Naive thymus-derived CD8-positive, alpha-beta T cell (primary cell): ENCODE measurements at regions of chr4 and their contacts with region 1.

Region 1: GRCh38 chr4:94165256-94165655 is 42.4 kb upstream of the SMARCAD1 start:
- DNase-seq: no peak
- ATAC-seq: no peak
- H3K4me3 Mint-ChIP-seq: no peak overlapping the region
- H3K27ac Mint-ChIP-seq: no peak overlapping the region
- H3K4me1 Mint-ChIP-seq: no peaks in the 10 kb centered on the region
- H3K27me3 Mint-ChIP-seq: peaks cover 0 to 4% (median 0%) of the 10 kb centered on the region in 5 donors

Region 2: GRCh38 chr4:95232358-95233156 is 1067.3 kb after region 1 on chr4:
- POLR2A ChIA-PET with region 1: no interaction called
- DNase-seq: no peak
- ATAC-seq: no peak
- H3K4me3 Mint-ChIP-seq: no peak overlapping the region
- H3K27ac Mint-ChIP-seq: no peak overlapping the region
- H3K4me1 Mint-ChIP-seq: peaks cover 0 to 4% (median 0%) of the 10 kb centered on the region in 4 donors
- H3K27me3 Mint-ChIP-seq: peaks cover 0 to 1% (median 0%) of the 10 kb centered on the region in 5 donors

Region 3: GRCh38 chr4:95304898-95305297 is 1139.6 kb after region 1 on chr4:
- POLR2A ChIA-PET with region 1: interaction called, 12 read pairs
- DNase-seq: no peak
- ATAC-seq: no peak
- H3K4me3 Mint-ChIP-seq: no peak overlapping the region
- H3K27ac Mint-ChIP-seq: no peak overlapping the region
- H3K4me1 Mint-ChIP-seq: no peaks in the 10 kb centered on the region
- H3K27me3 Mint-ChIP-seq: no peaks in the 10 kb centered on the region